ENCODE measurements at regions of chr11 and their contacts with region 1.

Region 1: GRCh38 chr11:130314750-130315285 is at the start of gene ZBTB44:
- DNase-seq: peak; percentile 92
- H3K4me3 Mint-ChIP-seq: peak within 1 kb of the TSS; percentile 92
- H3K27ac Mint-ChIP-seq: peak within 1 kb of the TSS; percentile 94
- H3K4me1 Mint-ChIP-seq: peaks cover 21% of the 10 kb centered on the region
- H3K27me3 Mint-ChIP-seq: no peaks in the 10 kb centered on the region
- total RNA-seq, gene ZBTB44: 35.0 to 39.8 TPM

Region 2: GRCh38 chr11:129815596-129816461 is 499.0 kb before region 1 on chr11 and contains the start of gene TMEM45B:
- CTCF ChIA-PET with region 1: no interaction called
- intact Hi-C with region 1: loop called (anchors 10 kb)
- DNase-seq: peak; percentile 39
- H3K4me3 Mint-ChIP-seq: peak within 1 kb of the TSS; percentile 79
- H3K27ac Mint-ChIP-seq: peak within 1 kb of the TSS; percentile 78
- H3K4me1 Mint-ChIP-seq: peaks cover 52% of the 10 kb centered on the region
- H3K27me3 Mint-ChIP-seq: peaks cover 2% of the 10 kb centered on the region
- total RNA-seq, gene TMEM45B: 3.8 to 3.9 TPM

Region 3: GRCh38 chr11:129895126-129896041 is 419.4 kb before region 1 on chr11 and contains the start of gene NFRKB:
- CTCF ChIA-PET with region 1: no interaction called
- intact Hi-C with region 1: loop called (anchors 2 kb)
- DNase-seq: peak; percentile 83
- H3K4me3 Mint-ChIP-seq: peak within 1 kb of the TSS; percentile 87
- H3K27ac Mint-ChIP-seq: peak within 1 kb of the TSS; percentile 79
- H3K4me1 Mint-ChIP-seq: peaks cover 27% of the 10 kb centered on the region
- H3K27me3 Mint-ChIP-seq: no peaks in the 10 kb centered on the region
- total RNA-seq, gene NFRKB: 34.0 to 36.4 TPM

Region 4: GRCh38 chr11:130050257-130050656 is 264.6 kb before region 1 on chr11:
- CTCF ChIA-PET with region 1: no interaction called
- intact Hi-C with region 1: no loop called
- DNase-seq: no peak
- H3K4me3 Mint-ChIP-seq: no peak overlapping the region
- H3K27ac Mint-ChIP-seq: no peak overlapping the region
- H3K4me1 Mint-ChIP-seq: no peaks in the 10 kb centered on the region
- H3K27me3 Mint-ChIP-seq: no peaks in the 10 kb centered on the region

Region 5: DNA sequence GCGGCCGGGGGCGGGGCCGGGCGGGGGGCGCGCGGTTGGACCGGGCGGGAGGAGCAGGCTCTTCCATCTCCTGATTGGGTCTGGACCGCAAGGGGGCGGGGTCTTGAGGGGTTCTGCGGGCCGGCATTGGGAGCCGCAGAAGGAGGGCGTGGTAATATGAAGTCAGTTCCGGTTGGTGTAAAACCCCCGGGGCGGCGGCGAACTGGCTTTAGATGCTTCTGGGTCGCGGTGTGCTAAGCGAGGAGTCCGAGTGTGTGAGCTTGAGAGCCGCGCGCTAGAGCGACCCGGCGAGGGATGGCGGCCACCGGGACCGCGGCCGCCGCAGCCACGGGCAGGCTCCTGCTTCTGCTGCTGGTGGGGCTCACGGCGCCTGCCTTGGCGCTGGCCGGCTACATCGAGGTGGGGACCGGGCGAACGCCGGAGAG is 245.1 kb before region 1 on chr11 and contains the start of gene APLP2:
- CTCF ChIA-PET with region 1: no interaction called
- intact Hi-C with region 1: loop called (anchors 1 kb)
- DNase-seq: peak; percentile 98
- H3K4me3 Mint-ChIP-seq: peak within 1 kb of the TSS; percentile 91
- H3K27ac Mint-ChIP-seq: peak within 1 kb of the TSS; percentile 86
- H3K4me1 Mint-ChIP-seq: peaks cover 23% of the 10 kb centered on the region
- H3K27me3 Mint-ChIP-seq: peaks cover 4% of the 10 kb centered on the region
- total RNA-seq, gene APLP2: 38.4 to 43.5 TPM

Region 6: DNA sequence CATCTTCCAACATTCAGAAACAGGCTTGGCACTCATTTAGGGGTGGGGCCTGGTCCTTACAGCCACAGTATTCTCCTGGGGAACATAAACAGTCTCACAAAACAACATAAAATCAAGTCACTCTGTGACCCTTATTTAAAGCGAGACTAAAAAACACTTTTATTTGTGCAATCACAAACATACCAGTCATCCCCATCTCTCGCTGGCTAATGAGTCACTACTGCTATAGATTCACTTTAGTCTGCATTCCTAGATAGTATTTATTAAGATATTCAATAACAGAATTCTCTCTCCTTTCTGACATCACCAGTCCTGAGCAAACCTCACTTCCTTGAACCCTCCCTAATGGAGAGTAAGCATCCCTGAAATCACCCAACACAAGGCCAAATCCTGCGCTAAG is 68.1 kb before region 1 on chr11:
- CTCF ChIA-PET with region 1: no interaction called
- intact Hi-C with region 1: loop called (anchors 1 kb)
- DNase-seq: peak; percentile 8
- H3K4me3 Mint-ChIP-seq: no peak overlapping the region
- H3K27ac Mint-ChIP-seq: no peak overlapping the region
- H3K4me1 Mint-ChIP-seq: peaks cover 40% of the 10 kb centered on the region
- H3K27me3 Mint-ChIP-seq: no peaks in the 10 kb centered on the region

Region 7: DNA sequence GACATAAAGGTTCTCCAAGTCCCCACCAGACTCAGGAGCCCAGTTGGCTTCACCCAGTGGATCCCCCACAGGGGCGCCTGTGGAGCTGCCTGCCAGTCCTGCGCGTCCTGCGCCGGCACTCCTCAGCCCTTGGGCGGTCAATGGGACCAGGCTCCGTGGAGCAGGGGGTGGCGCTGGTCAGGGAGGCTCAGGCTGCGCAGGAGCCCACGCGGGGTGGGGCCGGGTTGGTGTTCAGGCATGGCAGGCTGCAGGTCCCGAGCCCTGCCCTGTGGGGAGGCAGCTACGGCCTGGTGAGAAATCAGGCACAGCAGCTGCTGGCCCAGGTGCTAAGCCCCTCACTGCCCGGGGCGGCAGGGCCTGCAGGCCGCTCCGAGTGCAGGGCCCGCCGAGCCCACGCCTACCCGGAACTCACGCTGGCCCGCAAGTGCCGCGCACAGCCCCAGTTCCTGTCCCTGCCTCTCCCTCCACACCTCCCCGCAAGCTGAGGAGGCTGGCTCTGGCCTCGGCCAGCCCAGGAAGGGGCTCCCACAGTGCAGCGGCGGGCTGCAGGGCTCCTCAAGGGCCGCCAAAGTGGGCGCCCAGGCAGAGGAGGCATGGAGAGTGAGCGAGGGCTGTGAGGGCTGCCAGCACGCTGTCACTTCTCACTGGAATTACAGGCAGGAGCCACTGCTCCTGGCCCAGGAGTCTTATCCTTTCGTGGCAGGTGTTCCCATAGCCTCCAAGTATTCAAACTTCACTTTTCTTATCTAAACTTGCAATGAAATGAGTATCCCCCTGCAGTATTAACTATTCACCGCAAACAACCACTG is 22.7 kb after region 1 on chr11:
- CTCF ChIA-PET with region 1: no interaction called
- intact Hi-C with region 1: no loop called
- DNase-seq: no peak
- H3K4me3 Mint-ChIP-seq: no peak overlapping the region
- H3K27ac Mint-ChIP-seq: no peak overlapping the region
- H3K4me1 Mint-ChIP-seq: peaks cover 3% of the 10 kb centered on the region
- H3K27me3 Mint-ChIP-seq: no peaks in the 10 kb centered on the region

Region 8: GRCh38 chr11:130389335-130389935 is 74.6 kb after region 1 on chr11:
- CTCF ChIA-PET with region 1: no interaction called
- intact Hi-C with region 1: loop called (anchors 1 kb)
- DNase-seq: no peak
- H3K4me3 Mint-ChIP-seq: no peak overlapping the region
- H3K27ac Mint-ChIP-seq: no peak overlapping the region
- H3K4me1 Mint-ChIP-seq: peaks cover 17% of the 10 kb centered on the region
- H3K27me3 Mint-ChIP-seq: no peaks in the 10 kb centered on the region

Region 9: DNA sequence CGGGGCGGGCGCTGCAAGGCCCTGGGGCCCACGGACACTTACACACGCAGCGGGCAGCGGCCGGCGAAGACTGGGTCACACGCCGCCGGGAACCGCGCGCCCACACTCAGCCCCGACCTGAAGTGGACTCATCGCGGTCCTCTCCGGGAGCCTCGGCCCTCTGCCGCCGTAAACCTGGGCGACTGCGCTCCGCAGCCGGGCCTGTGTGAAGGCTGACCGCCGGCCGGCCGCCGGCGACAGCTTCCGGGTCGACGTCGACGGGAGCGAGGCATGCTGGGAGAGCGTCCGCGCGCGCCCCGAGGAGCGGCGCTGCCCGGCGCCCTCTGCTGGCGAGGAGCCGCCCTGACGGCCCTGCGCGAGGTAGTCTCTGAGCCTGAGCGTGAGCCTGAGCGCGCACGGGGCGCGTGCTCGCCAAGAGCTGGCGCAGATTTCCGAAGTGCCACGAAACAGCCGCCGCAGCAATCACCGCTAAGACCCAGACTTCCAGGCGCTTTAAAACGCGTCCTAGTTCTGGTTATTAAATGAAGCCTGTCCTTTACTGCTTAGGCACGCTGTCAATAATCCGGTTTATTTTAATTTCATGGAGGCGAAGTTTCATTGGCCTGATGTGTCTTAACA is 601.5 kb after region 1 on chr11 and contains the start of gene SNX19:
- CTCF ChIA-PET with region 1: no interaction called
- intact Hi-C with region 1: loop called (anchors 5 kb)
- DNase-seq: peak; percentile 90
- H3K4me3 Mint-ChIP-seq: peak within 1 kb of the TSS; percentile 78
- H3K27ac Mint-ChIP-seq: peak within 1 kb of the TSS; percentile 57
- H3K4me1 Mint-ChIP-seq: peaks cover 32% of the 10 kb centered on the region
- H3K27me3 Mint-ChIP-seq: no peaks in the 10 kb centered on the region
- total RNA-seq, gene SNX19: 18.0 to 21.6 TPM

Measured in activated naive CD4-positive, alpha-beta T cell treated with anti-CD3 and anti-CD28 coated beads for 36 hours (primary cell).